Activated CD4-positive, alpha-beta T cell treated with anti-CD3 and anti-CD28 coated beads for 36 hours (primary cell): ENCODE measurements at regions of chr7 and their contacts with region 1.

Region 1: DNA sequence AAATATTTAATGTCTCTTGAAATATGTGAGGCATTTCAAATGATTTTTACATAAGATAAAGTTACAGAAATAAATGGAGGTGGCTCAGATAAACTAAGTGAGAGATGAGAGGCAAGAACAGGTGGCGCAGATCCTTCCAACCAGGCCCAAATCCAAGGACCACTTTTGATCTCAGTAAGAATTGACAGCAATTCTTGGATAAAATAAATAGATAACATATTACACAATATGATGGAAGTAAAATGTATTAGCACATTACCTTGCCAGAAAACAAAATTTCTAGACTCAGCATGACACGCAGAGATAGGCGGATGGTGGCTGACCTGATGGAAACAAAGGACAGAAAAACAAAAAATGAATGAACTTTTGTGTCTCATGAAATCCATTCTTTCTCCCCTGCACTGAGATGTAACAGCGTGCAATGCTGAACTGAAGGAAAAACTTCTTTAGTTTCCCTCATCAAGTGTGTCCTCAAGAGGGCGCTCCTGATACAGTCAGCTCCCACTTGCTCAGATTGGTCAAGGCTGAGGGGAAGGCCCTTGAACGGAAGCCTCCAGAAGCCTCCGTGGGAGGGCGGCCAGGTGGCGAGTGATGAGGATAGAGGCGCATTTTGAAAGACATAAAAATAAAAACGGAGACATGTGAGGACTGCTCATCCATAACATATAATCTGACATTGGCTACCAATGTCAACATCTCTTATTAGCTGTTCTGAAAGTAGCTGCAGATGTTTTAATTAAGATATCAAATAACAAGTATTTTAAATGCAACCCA is 62.8 kb upstream of the GSDME start:
- DNase-seq: peak; percentile 87
- ATAC-seq: peak; percentile 40
- H3K4me3 Mint-ChIP-seq: peak overlapping the region; percentile 64
- H3K27ac Mint-ChIP-seq: peak overlapping the region; percentile 100
- H3K4me1 Mint-ChIP-seq: peaks cover 43% of the 10 kb centered on the region
- H3K27me3 Mint-ChIP-seq: no peaks in the 10 kb centered on the region

Region 2: DNA sequence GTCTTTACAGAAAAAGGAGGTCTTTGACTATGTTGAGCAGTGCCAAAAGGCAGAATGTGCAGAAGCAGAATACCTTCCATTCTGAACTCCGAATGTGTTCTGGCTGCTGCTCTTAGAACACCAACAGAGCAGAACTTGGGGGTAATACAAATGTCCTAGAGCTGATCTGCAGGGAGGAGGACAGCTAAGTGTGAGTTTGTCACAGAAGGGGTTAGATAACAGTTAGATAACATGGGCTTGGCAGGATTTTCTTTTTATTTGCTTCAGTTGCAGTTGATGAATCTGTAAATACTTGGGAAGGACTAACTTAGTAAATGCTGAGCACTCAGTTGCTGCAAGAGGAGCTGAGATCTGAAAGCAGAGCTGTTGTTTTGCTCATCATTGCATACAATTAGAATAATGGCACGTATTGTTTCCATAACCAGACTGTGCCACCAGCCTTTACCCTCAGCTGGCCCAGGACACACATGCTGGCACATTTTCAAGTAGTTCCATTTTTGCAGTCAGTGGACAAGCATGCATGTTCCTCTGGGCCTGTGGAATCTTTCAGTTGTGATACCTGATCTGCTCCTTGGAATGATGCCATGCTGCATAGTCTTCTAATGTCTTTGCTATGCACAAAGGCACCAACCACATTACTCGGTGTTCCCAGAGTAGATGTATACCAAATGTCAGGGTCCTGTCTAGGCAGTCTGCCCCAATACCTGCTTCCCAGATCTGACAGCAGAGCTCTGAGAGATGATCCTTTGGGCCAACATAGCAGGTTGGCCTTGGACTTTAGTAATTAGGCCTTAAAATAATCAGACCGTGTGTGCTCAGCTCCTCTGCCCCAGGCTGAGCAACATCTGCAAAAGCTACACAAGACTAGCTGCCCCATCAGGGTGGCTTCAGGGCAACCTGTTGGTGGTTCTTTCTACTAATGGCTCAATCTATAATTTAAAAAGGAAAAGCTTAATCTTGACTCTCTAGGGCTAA is 118.6 kb before region 1 on chr7:
- CTCF ChIA-PET with region 1: no interaction called
- POLR2A ChIA-PET with region 1: no interaction called
- intact Hi-C with region 1: no loop called
- DNase-seq: no peak
- ATAC-seq: no peak
- H3K4me3 Mint-ChIP-seq: no peak overlapping the region
- H3K27ac Mint-ChIP-seq: no peak overlapping the region
- H3K4me1 Mint-ChIP-seq: no peaks in the 10 kb centered on the region
- H3K27me3 Mint-ChIP-seq: no peaks in the 10 kb centered on the region

Region 3: DNA sequence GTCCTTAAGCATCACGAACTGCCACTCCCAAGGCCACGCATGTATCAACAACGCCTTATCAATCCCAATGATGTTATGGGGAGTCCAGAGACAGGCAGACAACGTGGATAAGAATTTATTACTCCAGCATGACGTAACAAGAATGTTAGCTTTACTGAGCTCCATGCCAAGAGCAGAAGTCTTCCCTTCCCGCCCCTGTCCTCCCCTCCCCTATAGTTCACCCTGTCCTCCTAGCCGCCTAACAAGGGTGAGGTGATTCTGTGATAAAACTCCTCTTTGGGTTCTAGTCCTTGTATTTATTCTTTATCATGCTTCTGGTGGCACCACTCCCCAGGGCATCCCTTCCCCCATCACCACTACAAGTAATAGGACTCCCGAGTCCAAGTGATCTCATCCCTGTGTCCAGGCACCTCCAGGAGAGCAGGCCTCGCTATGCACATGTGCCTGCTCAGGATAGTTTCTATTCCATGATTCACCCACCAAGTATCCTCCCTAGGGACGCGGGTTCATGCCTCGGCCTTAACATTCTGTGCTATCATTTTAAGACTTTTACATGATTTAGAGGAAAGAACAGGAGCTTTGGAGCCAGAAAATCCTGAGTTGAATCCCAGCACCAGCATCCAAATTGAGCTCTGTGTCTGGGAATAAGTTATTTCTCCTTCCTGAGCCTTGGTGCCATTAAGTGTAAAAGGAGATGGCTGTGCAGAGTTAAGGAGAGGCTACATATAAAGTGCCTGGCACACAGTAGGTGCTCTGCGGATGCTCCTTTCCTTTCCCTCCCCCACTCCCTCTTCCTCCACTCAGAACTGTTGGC is 78.2 kb before region 1 on chr7:
- CTCF ChIA-PET with region 1: no interaction called
- POLR2A ChIA-PET with region 1: no interaction called
- intact Hi-C with region 1: no loop called
- DNase-seq: no peak
- ATAC-seq: no peak
- H3K4me3 Mint-ChIP-seq: no peak overlapping the region
- H3K27ac Mint-ChIP-seq: no peak overlapping the region
- H3K4me1 Mint-ChIP-seq: no peaks in the 10 kb centered on the region
- H3K27me3 Mint-ChIP-seq: peaks cover 20% of the 10 kb centered on the region

Region 4: DNA sequence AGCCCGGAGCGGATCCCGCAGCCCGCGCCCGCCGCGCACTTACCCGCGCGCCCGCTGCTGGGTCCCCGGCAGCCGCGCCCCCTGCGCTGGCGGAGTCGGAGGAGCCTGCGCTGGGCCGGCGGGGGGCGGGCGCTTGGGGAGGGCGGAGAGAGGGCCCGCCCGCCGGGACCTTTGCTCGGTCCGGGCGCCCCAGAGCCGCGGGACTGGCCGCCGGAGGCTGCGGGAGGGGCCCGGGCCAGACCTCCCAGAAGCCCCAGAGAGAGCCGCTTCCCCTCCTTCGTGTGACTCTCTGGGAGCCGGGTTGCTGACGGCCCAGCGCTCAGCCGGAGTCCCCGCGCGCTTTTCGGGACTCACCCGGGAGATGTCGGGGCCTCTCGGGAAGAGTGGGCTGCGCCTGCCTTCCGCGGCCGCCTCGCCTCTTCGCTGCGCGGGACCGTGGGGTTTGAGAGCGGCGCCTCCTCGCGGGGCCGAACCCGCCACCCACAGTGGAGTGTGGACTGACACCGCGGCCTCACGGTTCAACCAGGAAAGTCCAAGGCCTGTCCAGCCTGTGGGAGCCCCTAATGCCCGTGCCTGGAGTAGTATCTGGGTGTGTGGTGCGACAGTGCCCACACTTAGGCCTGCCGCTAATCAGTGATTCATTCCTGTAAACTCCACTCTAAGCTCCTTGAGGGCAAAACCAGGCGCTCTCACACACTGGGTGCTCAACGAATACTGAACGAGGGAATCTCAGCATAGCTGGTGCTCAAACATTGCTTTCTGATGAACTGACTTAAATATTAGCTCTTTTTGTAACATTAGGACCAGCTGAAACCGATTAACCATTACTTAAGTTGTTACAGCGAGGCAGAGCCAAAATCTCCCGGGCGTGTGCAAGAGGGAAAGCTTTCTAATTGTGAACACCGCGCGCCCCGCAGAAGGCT is 62.5 kb before region 1 on chr7 and contains the start of gene GSDME:
- CTCF ChIA-PET with region 1: interaction called, 3 read pairs
- POLR2A ChIA-PET with region 1: no interaction called
- intact Hi-C with region 1: loop called in 1 of 2 experiments (anchors 1 kb)
- DNase-seq: peak; percentile 62
- ATAC-seq: peak; percentile 52
- H3K4me3 Mint-ChIP-seq: peak within 1 kb of the TSS; percentile 78
- H3K27ac Mint-ChIP-seq: peak within 1 kb of the TSS; percentile 85
- H3K4me1 Mint-ChIP-seq: peaks cover 33% of the 10 kb centered on the region
- H3K27me3 Mint-ChIP-seq: peaks cover 39% of the 10 kb centered on the region
- total RNA-seq, gene GSDME: 6.2 to 8.5 TPM

Region 5: DNA sequence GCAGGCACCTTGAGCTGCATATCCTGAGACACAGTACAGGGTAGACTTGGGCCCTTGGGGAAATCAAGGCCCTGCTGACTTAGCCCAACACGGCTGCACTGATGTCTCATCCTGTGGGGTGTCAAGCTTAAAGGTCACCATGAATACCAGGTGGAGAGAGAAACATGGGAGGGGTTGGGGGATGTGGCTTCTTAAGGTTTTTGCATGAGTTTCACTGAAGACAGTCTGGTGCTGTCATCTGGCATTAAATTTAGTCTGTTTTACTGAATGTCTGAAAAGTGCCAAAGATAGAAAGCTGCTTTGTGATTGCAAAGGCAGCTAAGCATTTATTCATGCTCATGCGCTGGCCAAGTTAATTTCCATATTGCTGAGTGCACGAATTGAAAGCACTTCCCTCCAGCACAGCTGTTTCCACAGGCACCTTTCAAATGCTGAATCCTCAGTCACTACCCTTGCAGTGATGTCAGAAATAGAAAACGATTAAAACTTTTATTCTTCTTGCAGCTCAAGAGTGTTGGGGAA is 57.7 kb after region 1 on chr7:
- CTCF ChIA-PET with region 1: interaction called, 18 read pairs
- POLR2A ChIA-PET with region 1: no interaction called
- intact Hi-C with region 1: loop called (anchors 2 kb)
- DNase-seq: peak; percentile 59
- ATAC-seq: peak; percentile 78
- H3K4me3 Mint-ChIP-seq: peak overlapping the region; percentile 29
- H3K27ac Mint-ChIP-seq: peak overlapping the region; percentile 69
- H3K4me1 Mint-ChIP-seq: peaks cover 56% of the 10 kb centered on the region
- H3K27me3 Mint-ChIP-seq: no peaks in the 10 kb centered on the region

Region 6: GRCh38 chr7:24922099-24922773 is 102.1 kb after region 1 on chr7:
- CTCF ChIA-PET with region 1: interaction called, 5 read pairs
- POLR2A ChIA-PET with region 1: no interaction called
- intact Hi-C with region 1: loop called in 1 of 2 experiments (anchors 2 kb)
- DNase-seq: no peak
- ATAC-seq: no peak
- H3K4me3 Mint-ChIP-seq: no peak overlapping the region
- H3K27ac Mint-ChIP-seq: peak overlapping the region; percentile 69
- H3K4me1 Mint-ChIP-seq: peaks cover 78% of the 10 kb centered on the region
- H3K27me3 Mint-ChIP-seq: no peaks in the 10 kb centered on the region

Region 7: DNA sequence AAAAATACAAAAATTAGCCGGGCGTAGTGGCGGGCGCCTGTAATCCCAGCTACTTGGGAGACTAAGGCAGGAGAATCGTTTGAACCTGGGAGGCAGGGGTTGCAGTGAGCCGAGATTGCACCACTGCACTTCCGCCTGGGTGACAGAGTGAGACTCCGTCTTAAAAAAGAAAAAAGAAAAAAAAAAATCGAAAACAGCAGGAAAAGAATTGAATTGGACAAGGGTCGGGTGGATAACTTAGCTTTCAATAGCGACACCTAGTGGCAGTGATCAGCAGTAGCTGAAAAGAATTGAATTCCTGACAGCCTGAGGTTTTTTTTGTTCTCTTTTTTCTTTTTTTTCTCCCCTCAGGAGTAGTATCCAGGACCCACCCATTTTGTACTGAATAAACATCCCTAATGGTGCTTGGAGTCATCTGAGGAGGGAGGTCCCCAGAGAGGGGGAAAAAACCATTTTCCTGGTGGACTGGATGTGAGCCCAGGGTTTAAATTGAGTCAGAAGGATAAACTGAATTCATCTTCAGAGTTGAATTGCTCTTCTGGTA is 249.9 kb after region 1 on chr7:
- CTCF ChIA-PET with region 1: interaction called, 37 read pairs
- POLR2A ChIA-PET with region 1: interaction called, 4 read pairs
- intact Hi-C with region 1: loop called (anchors 1 kb)
- DNase-seq: peak; percentile 66
- ATAC-seq: peak; percentile 53
- H3K4me3 Mint-ChIP-seq: no peak overlapping the region
- H3K27ac Mint-ChIP-seq: no peak overlapping the region
- H3K4me1 Mint-ChIP-seq: peaks cover 12% of the 10 kb centered on the region
- H3K27me3 Mint-ChIP-seq: no peaks in the 10 kb centered on the region

Region 8: GRCh38 chr7:25117226-25118047 is 297.3 kb after region 1 on chr7:
- CTCF ChIA-PET with region 1: interaction called, 18 read pairs
- POLR2A ChIA-PET with region 1: interaction called, 3 read pairs
- intact Hi-C with region 1: no loop called
- DNase-seq: no peak
- ATAC-seq: peak; percentile 86
- H3K4me3 Mint-ChIP-seq: peak overlapping the region; percentile 12
- H3K27ac Mint-ChIP-seq: peak overlapping the region; percentile 43
- H3K4me1 Mint-ChIP-seq: peaks cover 53% of the 10 kb centered on the region
- H3K27me3 Mint-ChIP-seq: no peaks in the 10 kb centered on the region